Ascending aorta (tissue), 2 donors: ENCODE measurements at regions of chr17 and their contacts with region 1.

Region 1: GRCh38 chr17:42577532-42578281 is at the start of gene PSMC3IP:
- DNase-seq: peak; percentile 84 to 97
- H3K4me3 ChIP-seq: peak within 1 kb of the TSS; percentile 68 to 76
- H3K27ac ChIP-seq: peak within 1 kb of the TSS; percentile 78 to 83
- H3K4me1 ChIP-seq: peaks cover 5 to 12% of the 10 kb centered on the region in 2 donors
- H3K27me3 ChIP-seq: no peaks in the 10 kb centered on the region
- CTCF ChIP-seq: peak in 1 of 3 experiments; percentile 22
- total RNA-seq, gene PSMC3IP: 2.9 TPM

Region 2: GRCh38 chr17:42536048-42536371 is 41.7 kb before region 1 on chr17 and contains the start of gene NAGLU:
- intact Hi-C with region 1: loop called (anchors 2 kb)
- DNase-seq: peak; percentile 83 to 97
- H3K4me3 ChIP-seq: peak within 1 kb of the TSS; percentile 72 to 79
- H3K27ac ChIP-seq: peak within 1 kb of the TSS; percentile 89 to 90
- H3K4me1 ChIP-seq: peaks cover 14 to 23% of the 10 kb centered on the region in 2 donors
- H3K27me3 ChIP-seq: no peaks in the 10 kb centered on the region
- CTCF ChIP-seq: no peak
- total RNA-seq, gene NAGLU: 94.7 TPM

Region 3: GRCh38 chr17:42554250-42555121 is 23.2 kb before region 1 on chr17:
- intact Hi-C with region 1: loop called (anchors 2 kb)
- DNase-seq: peak in 1 of 2 donors; percentile 93
- H3K4me3 ChIP-seq: peak overlapping the region; percentile 82 to 83
- H3K27ac ChIP-seq: peak overlapping the region; percentile 82 to 91
- H3K4me1 ChIP-seq: peaks cover 0 to 19% of the 10 kb centered on the region in 2 donors
- H3K27me3 ChIP-seq: no peaks in the 10 kb centered on the region
- CTCF ChIP-seq: no peak

Region 4: GRCh38 chr17:42659079-42659931 is 81.6 kb after region 1 on chr17 and contains the start of gene TUBG2:
- intact Hi-C with region 1: no loop called
- DNase-seq: peak in 1 of 2 donors; percentile 91
- H3K4me3 ChIP-seq: peak within 1 kb of the TSS; percentile 49 to 85
- H3K27ac ChIP-seq: peak within 1 kb of the TSS; percentile 71 to 91
- H3K4me1 ChIP-seq: peaks cover 9 to 13% of the 10 kb centered on the region in 2 donors
- H3K27me3 ChIP-seq: no peaks in the 10 kb centered on the region
- CTCF ChIP-seq: no peak
- total RNA-seq, gene TUBG2: 73.1 TPM

Region 5: DNA sequence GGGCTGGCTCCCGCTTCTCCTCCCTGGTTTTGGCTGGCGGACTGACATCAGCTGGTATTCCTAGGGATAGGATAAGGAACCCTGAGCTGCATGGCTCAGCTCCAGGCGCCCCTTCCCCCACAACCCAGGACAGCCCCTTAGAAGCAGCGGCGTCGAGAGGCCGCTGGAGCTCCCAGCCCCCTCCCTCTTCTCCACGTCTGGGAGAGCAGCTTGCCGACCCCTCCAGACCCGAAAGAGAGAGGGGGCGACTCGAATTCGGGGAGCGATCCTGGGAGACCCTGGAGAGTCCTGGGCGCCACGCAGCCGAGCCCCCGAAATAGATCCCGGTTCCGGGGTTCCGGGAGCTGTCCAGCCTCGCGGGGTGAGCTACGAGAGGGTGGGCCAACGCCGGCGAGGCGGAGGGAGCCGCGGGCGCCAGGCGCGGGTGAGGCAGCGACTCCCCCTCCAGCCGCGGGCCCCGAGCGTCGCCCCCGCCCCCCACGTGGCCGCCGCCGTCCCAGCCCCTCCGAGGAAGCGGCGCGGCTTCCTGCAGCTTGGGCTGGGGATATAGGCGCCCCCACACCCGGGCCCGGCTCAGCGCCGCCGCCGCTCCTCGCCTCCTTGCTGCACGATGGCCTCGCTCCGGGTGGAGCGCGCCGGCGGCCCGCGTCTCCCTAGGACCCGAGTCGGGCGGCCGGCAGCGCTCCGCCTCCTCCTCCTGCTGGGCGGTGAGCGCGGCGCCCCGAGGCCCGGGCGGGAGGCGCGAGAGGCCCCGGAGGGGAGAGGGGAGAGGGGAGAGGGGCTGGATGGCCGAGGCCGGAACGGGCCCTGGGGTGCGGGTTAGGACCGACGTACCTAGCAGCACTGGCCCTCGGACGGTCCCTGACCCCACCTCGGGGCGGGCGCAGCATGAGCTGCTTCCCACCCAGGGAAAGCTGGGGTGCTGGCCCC is 183.2 kb after region 1 on chr17 and contains the start of gene RAMP2:
- intact Hi-C with region 1: loop called (anchors 1 kb)
- DNase-seq: no peak
- H3K4me3 ChIP-seq: peak within 1 kb of the TSS; percentile 71 to 78
- H3K27ac ChIP-seq: peak within 1 kb of the TSS in 1 of 2 donors; percentile 55
- H3K4me1 ChIP-seq: peaks cover 8 to 10% of the 10 kb centered on the region in 2 donors
- H3K27me3 ChIP-seq: peaks cover 13% of the 10 kb centered on the region
- CTCF ChIP-seq: no peak
- total RNA-seq, gene RAMP2: 80.5 TPM

Region 6: GRCh38 chr17:42819944-42820535 is 242.3 kb after region 1 on chr17:
- intact Hi-C with region 1: loop called (anchors 10 kb)
- DNase-seq: no peak
- H3K4me3 ChIP-seq: no peak overlapping the region
- H3K27ac ChIP-seq: no peak overlapping the region
- H3K4me1 ChIP-seq: peaks cover 6 to 12% of the 10 kb centered on the region in 2 donors
- H3K27me3 ChIP-seq: no peaks in the 10 kb centered on the region
- CTCF ChIP-seq: peak in 2 of 3 experiments; percentile 49 to 58